ENCODE measurements at regions of chr7 and their contacts with region 1.

Region 1: GRCh38 chr7:17706734-17707133 is 233.6 kb downstream of the SNX13 start:
- DNase-seq: peak; percentile 49 to 80
- ATAC-seq: peak; percentile 95 to 96
- H3K4me3 ChIP-seq: no peak overlapping the region
- H3K27ac ChIP-seq: peak overlapping the region; percentile 29 to 43; a peak in 3 of 6 replicates
- H3K4me1 ChIP-seq: peaks cover 6% of the 10 kb centered on the region; the same call in 2 of the 3 replicates
- CTCF ChIP-seq: peak; percentile 82
- EP300 ChIP-seq: no peak
- POLR2A ChIP-seq: no peak
- RAD21 ChIP-seq: peak; percentile 90 to 91

Region 2: GRCh38 chr7:17159500-17160037 is 547.2 kb before region 1 on chr7:
- CTCF ChIA-PET with region 1: no interaction called
- POLR2A ChIA-PET with region 1: no interaction called
- DNase-seq: no peak
- ATAC-seq: no peak
- H3K4me3 ChIP-seq: no peak overlapping the region
- H3K27ac ChIP-seq: no peak overlapping the region
- H3K4me1 ChIP-seq: no peaks in the 10 kb centered on the region
- CTCF ChIP-seq: no peak
- EP300 ChIP-seq: no peak
- POLR2A ChIP-seq: no peak
- RAD21 ChIP-seq: no peak

Region 3: DNA sequence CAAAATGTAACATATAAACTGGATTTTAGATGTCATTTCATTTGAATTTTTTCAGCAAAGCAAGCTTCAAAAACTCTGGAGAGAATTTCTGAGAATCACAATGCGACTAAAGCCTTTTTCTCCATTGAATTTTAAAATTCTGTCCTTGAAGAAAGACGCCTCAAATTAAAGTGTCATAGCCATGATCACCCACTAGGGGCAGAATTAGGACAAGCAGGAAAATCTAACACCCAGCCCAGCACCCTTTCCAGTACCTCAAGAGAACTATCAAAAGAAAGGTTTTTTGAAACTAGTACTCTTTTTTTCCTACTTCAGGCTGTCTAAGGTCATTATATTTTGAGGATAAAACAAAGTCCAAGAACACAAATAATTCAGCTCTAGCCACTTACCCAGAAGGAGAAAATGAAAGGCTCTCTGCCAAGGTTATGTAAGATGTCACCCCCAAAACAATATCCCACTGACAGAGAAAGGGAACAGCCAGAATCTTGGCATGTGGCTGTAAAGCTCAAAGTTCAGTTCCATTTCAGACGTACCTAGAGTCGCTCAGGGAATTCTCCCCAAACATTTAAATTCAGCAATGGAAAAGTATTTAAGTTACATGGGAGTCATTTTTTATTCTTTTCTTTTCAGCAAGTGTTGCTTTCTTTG is 65.9 kb before region 1 on chr7:
- CTCF ChIA-PET with region 1: no interaction called
- POLR2A ChIA-PET with region 1: no interaction called
- DNase-seq: peak; percentile 18 to 54
- ATAC-seq: peak in 1 of 2 experiments; percentile 49; a peak in 2 of 6 replicates
- H3K4me3 ChIP-seq: no peak overlapping the region
- H3K27ac ChIP-seq: no peak overlapping the region
- H3K4me1 ChIP-seq: peaks cover 9% of the 10 kb centered on the region
- CTCF ChIP-seq: peak; percentile 53
- EP300 ChIP-seq: no peak
- POLR2A ChIP-seq: no peak
- RAD21 ChIP-seq: peak; percentile 22 to 26; a peak in 3 of 5 replicates

Region 4: DNA sequence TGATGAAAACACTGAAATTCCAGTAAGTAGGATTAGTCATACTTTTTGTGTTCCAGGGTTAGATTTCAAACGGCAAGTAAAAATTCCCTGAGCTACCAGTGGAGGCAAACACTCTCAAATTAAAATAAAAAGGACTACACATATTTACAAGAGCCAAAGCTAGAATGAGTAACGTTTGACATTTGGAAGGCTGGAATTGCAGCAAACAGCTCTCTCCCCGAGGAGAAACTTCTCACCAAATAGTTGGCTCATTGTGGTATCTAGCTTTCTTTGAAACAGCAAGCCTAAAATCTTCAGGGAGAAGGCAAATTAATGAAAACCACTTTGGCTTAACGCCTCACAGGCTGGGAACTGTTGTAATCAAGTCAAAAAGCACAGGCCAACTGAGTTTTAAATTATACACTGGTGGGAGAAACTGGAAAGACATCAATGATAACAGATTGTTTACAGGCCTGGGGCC is 54.8 kb before region 1 on chr7:
- CTCF ChIA-PET with region 1: no interaction called
- POLR2A ChIA-PET with region 1: no interaction called
- DNase-seq: peak in 1 of 2 experiments; percentile 37
- ATAC-seq: peak; percentile 64 to 71
- H3K4me3 ChIP-seq: no peak overlapping the region
- H3K27ac ChIP-seq: peak overlapping the region; percentile 69 to 76
- H3K4me1 ChIP-seq: peaks cover 18% of the 10 kb centered on the region
- CTCF ChIP-seq: 0 out of 3 replicates have a peak, but pooled peaks have one; percentile 4
- EP300 ChIP-seq: no peak
- POLR2A ChIP-seq: no peak
- RAD21 ChIP-seq: no peak

Region 5: GRCh38 chr7:17680943-17681351 is 25.8 kb before region 1 on chr7:
- CTCF ChIA-PET with region 1: interaction called, 12 read pairs
- POLR2A ChIA-PET with region 1: no interaction called
- DNase-seq: peak in 1 of 2 experiments; percentile 20
- ATAC-seq: peak; percentile 33 to 59; a peak in 3 of 6 replicates
- H3K4me3 ChIP-seq: no peak overlapping the region
- H3K27ac ChIP-seq: peak overlapping the region; percentile 81 to 87
- H3K4me1 ChIP-seq: peaks cover 61% of the 10 kb centered on the region
- CTCF ChIP-seq: peak; percentile 82
- EP300 ChIP-seq: no peak
- POLR2A ChIP-seq: no peak
- RAD21 ChIP-seq: peak; percentile 83 to 94

Region 6: GRCh38 chr7:17696443-17696842 is 10.3 kb before region 1 on chr7:
- CTCF ChIA-PET with region 1: interaction called, 15 read pairs
- POLR2A ChIA-PET with region 1: no interaction called
- DNase-seq: peak; percentile 70 to 93
- ATAC-seq: peak; percentile 100
- H3K4me3 ChIP-seq: no peak overlapping the region
- H3K27ac ChIP-seq: peak overlapping the region; percentile 92 to 93
- H3K4me1 ChIP-seq: peaks cover 24% of the 10 kb centered on the region
- CTCF ChIP-seq: no peak
- EP300 ChIP-seq: peak; percentile 96 to 97
- POLR2A ChIP-seq: no peak
- RAD21 ChIP-seq: peak in 1 of 2 experiments; percentile 62; a peak in 3 of 5 replicates

Region 7: DNA sequence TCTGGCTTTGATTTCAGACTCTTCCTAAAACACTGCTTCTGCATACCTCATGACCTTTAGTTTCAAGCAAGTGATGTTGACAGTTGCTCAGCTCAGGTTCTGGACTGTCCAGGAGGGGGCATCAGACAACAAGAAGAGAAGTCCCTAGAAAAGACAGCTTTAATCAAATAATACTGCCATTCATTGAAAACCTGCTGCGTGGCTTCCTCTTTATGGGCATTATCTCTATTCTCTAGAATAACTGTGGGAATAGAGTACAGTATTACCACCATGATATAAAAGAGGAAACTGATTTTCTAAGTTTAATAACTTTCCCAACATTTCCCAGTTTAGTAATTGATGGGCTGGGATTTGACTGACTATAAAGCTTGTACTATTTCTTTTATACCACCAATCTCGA is 63.2 kb after region 1 on chr7:
- CTCF ChIA-PET with region 1: interaction called, 20 read pairs
- POLR2A ChIA-PET with region 1: interaction called, 3 read pairs
- DNase-seq: peak; percentile 15 to 77
- ATAC-seq: peak; percentile 87 to 93
- H3K4me3 ChIP-seq: no peak overlapping the region
- H3K27ac ChIP-seq: no peak overlapping the region
- H3K4me1 ChIP-seq: peaks cover 18% of the 10 kb centered on the region; the same call in 2 of the 3 replicates
- CTCF ChIP-seq: peak; percentile 81
- EP300 ChIP-seq: no peak
- POLR2A ChIP-seq: no peak
- RAD21 ChIP-seq: peak; percentile 87 to 92

Region 8: DNA sequence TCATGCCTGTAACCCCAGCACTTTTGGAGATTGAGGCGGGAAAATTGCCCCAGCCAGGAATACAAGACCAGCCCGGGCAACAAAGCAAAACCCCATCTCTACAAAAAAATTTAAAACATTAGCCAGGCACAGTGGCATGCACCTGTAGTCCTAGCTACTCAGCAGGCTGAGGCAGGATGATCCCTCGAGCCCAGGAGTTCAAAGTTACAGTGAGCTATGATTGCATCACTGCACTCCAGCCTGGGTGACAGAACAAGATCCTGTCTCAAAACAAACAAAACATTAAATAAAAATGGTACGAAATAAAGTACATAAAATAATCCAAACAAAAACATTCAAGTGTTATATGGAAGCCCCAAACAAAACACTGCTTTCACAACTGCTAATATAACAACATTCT is 108.6 kb after region 1 on chr7:
- CTCF ChIA-PET with region 1: no interaction called
- POLR2A ChIA-PET with region 1: no interaction called
- DNase-seq: no peak
- ATAC-seq: no peak
- H3K4me3 ChIP-seq: no peak overlapping the region
- H3K27ac ChIP-seq: no peak overlapping the region
- H3K4me1 ChIP-seq: peaks cover 6% of the 10 kb centered on the region; the same call in 1 of the 3 replicates
- CTCF ChIP-seq: no peak
- EP300 ChIP-seq: no peak
- POLR2A ChIP-seq: no peak
- RAD21 ChIP-seq: no peak

Region 9: GRCh38 chr7:18320971-18321567 is 614.3 kb after region 1 on chr7:
- CTCF ChIA-PET with region 1: interaction called, 10 read pairs
- POLR2A ChIA-PET with region 1: no interaction called
- DNase-seq: peak; percentile 17 to 55
- ATAC-seq: peak; percentile 54 to 72; a peak in 4 of 6 replicates
- H3K4me3 ChIP-seq: no peak overlapping the region
- H3K27ac ChIP-seq: no peak overlapping the region
- H3K4me1 ChIP-seq: no peaks in the 10 kb centered on the region
- CTCF ChIP-seq: peak; percentile 48
- EP300 ChIP-seq: no peak
- POLR2A ChIP-seq: no peak
- RAD21 ChIP-seq: peak; percentile 28 to 57; a peak in 3 of 5 replicates

Region 10: DNA sequence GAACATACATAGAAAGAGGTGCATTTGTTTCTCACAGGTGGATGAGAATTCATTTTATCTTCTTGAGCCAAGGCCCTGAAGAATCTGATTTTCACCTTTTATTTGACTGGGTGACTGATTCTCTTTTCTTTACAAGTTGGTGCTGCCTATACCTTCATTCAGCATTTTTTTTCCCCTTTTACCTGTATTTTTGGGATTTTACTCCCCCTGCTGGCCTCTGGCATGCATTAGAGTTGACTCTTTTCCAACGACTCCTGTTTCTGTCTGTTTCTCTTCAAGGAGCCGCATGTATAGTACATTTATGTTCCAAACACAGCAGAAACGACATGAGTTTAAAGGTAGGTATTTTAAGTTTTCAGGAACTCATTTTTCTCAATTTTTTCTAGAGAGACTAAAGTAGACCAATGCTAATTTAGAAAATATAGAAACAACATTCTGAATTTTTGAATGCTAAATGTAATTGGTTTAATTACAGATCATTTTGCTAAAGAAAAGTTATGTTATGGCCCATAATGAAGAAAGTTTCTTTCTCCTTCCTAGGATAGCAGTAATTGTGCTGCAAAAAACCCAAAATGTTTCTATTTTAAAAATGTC is 639.0 kb after region 1 on chr7:
- CTCF ChIA-PET with region 1: interaction called, 10 read pairs
- POLR2A ChIA-PET with region 1: no interaction called
- DNase-seq: peak; percentile 5 to 48
- ATAC-seq: peak; percentile 78 to 81
- H3K4me3 ChIP-seq: no peak overlapping the region
- H3K27ac ChIP-seq: no peak overlapping the region
- H3K4me1 ChIP-seq: no peaks in the 10 kb centered on the region
- CTCF ChIP-seq: peak; percentile 91
- EP300 ChIP-seq: no peak
- POLR2A ChIP-seq: no peak
- RAD21 ChIP-seq: peak; percentile 85 to 88

Region 11: DNA sequence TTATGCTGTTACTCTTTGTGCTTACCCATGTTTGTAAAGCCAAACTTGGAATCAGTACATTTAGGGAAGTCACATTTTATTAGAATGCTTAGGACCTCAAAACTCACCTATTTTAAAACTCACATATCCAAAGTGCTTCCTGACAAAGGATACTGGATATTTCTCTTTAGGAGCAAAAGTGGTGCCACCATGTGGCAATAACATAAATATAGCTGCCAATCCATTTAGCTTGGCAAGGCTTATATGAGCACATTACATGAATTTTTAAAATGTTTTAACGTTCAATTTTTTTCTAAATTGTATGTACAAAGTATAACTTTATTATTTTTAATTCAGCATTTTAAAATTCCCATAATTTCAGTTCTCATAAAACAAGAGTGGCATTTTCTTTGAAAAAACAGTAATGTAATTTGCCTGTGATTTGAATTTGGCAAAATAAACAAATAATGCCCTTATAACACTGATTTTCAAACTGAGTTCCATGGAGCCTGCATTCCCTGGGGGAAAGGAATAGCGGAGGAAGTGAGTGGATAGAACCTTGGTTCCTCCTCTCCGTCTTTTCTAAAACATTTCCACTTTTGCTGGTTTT is 864.2 kb after region 1 on chr7:
- CTCF ChIA-PET with region 1: interaction called, 13 read pairs
- POLR2A ChIA-PET with region 1: no interaction called
- DNase-seq: peak; percentile 3 to 40
- ATAC-seq: peak in 1 of 2 experiments; percentile 39; a peak in 1 of 6 replicates
- H3K4me3 ChIP-seq: no peak overlapping the region
- H3K27ac ChIP-seq: no peak overlapping the region
- H3K4me1 ChIP-seq: no peaks in the 10 kb centered on the region
- CTCF ChIP-seq: peak; percentile 52
- EP300 ChIP-seq: no peak
- POLR2A ChIP-seq: no peak
- RAD21 ChIP-seq: peak; percentile 39 to 54; a peak in 4 of 5 replicates